H1 (cell line): ENCODE measurements at regions of chr3 and their contacts with region 1.

Region 1: DNA sequence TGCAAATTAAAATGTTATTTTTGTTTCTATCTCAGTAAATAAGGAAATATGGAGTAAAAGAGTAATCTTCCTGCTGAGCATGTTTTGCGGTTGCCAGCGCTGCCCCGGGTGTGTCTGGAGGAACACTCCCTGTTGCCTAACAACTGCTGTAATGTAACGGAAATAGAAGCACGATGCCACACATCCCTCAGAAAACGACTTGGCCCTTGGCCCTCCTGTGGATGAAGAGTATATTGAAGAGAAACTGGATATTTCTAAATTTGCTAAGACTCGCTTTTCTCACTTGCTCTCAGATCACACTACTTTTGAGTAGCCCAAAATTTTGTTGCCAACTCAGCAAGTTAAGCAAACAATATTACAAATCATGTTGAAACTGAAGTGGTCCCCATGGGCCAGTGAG is 18.9 kb downstream of the CX3CR1 start:
- DNase-seq: no peak
- H3K4me3 ChIP-seq: no peak overlapping the region
- H3K27ac ChIP-seq: no peak overlapping the region
- H3K4me1 ChIP-seq: no peaks in the 10 kb centered on the region
- H3K27me3 ChIP-seq: no peaks in the 10 kb centered on the region
- CTCF ChIP-seq: peak in 2 of 3 experiments; percentile 28 to 34; a peak in 2 of 4 replicates
- EP300 ChIP-seq: no peak
- POLR2A ChIP-seq: no peak
- RAD21 ChIP-seq: peak; percentile 26 to 29; a peak in 2 of 4 replicates

Region 2: GRCh38 chr3:39249453-39250115 is 11.4 kb before region 1 on chr3:
- CTCF ChIA-PET with region 1: interaction called, 13 read pairs
- POLR2A ChIA-PET with region 1: no interaction called
- DNase-seq: no peak
- H3K4me3 ChIP-seq: no peak overlapping the region
- H3K27ac ChIP-seq: no peak overlapping the region
- H3K4me1 ChIP-seq: peaks cover 0 to 3% (median 0%) of the 10 kb centered on the region in 4 experiments; a peak in 1 of 7 replicates
- H3K27me3 ChIP-seq: no peaks in the 10 kb centered on the region; a peak in 2 of 7 replicates
- CTCF ChIP-seq: no peak
- EP300 ChIP-seq: no peak
- POLR2A ChIP-seq: no peak
- RAD21 ChIP-seq: no peak